ENCODE measurements at regions of chr15 and their contacts with region 1.

Region 1: GRCh38 chr15:88904624-88905327 is 8.4 kb downstream of the MFGE8 start:
- DNase-seq: peak; percentile 25 to 43 (median 43)
- H3K4me3 ChIP-seq: no peak overlapping the region
- H3K4me3 Mint-ChIP-seq: no peak overlapping the region
- H3K27ac ChIP-seq: no peak overlapping the region
- H3K27ac Mint-ChIP-seq: peak overlapping the region in 2 of 7 donors; percentile 38 to 74
- H3K4me1 ChIP-seq: no peaks in the 10 kb centered on the region
- H3K4me1 Mint-ChIP-seq: peaks cover 2% of the 10 kb centered on the region
- H3K27me3 ChIP-seq: no peaks in the 10 kb centered on the region
- H3K27me3 Mint-ChIP-seq: peaks cover 0 to 2% (median 0%) of the 10 kb centered on the region in 3 donors
- CTCF ChIP-seq: peak; percentile 95

Region 2: GRCh38 chr15:88844749-88845386 is 59.9 kb before region 1 on chr15:
- intact Hi-C with region 1: no loop called
- DNase-seq: no peak
- H3K4me3 ChIP-seq: no peak overlapping the region
- H3K4me3 Mint-ChIP-seq: no peak overlapping the region
- H3K27ac ChIP-seq: no peak overlapping the region
- H3K27ac Mint-ChIP-seq: no peak overlapping the region
- H3K4me1 ChIP-seq: no peaks in the 10 kb centered on the region
- H3K4me1 Mint-ChIP-seq: no peaks in the 10 kb centered on the region
- H3K27me3 ChIP-seq: no peaks in the 10 kb centered on the region
- H3K27me3 Mint-ChIP-seq: peaks cover 0 to 9% (median 0%) of the 10 kb centered on the region in 3 donors
- CTCF ChIP-seq: no peak

Region 3: GRCh38 chr15:89017370-89018066 is 112.7 kb after region 1 on chr15:
- intact Hi-C with region 1: loop called in 1 of 2 experiments (anchors 10 kb)
- DNase-seq: peak; percentile 10 to 23 (median 21)
- H3K4me3 ChIP-seq: peak overlapping the region in 1 of 3 experiments; percentile 45
- H3K4me3 Mint-ChIP-seq: peak overlapping the region; percentile 50 to 51
- H3K27ac ChIP-seq: no peak overlapping the region
- H3K27ac Mint-ChIP-seq: peak overlapping the region in 1 of 7 donors; percentile 41
- H3K4me1 ChIP-seq: peaks cover 8% of the 10 kb centered on the region in 2 donors
- H3K4me1 Mint-ChIP-seq: peaks cover 14% of the 10 kb centered on the region
- H3K27me3 ChIP-seq: peaks cover 0 to 11% of the 10 kb centered on the region in 2 donors
- H3K27me3 Mint-ChIP-seq: peaks cover 6 to 26% (median 14%) of the 10 kb centered on the region in 3 donors
- CTCF ChIP-seq: peak; percentile 66

Region 4: DNA sequence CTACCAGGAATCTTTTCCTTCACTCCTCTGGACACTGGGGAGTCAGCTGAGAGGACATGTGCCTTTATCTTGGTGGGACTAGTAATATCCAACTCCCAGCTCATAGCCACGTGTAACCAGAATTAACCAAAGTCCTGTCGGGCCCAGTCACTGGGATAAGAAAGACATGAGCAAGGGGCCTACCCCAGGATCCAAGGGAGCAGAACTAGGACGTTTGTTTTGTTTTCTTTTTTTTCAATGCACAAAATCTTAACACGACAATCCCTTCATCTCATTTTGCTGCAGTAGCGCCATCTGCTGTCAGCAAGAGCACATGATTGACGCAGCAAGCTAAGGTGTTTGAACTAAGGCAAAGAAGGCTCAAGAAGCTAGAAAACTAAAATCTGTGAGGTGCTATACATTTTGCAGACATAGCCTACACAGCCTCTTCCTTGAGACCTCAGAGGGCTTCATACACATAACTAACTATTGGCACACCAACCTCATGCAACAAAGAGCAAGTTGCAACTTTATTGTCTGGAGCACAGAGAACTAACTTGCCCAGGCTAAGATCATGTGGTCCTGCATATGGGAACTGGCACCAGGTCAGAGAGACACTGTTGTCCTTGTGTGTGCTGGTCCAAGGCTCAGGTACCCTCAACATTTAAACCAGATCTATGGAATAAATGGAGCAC is 273.0 kb after region 1 on chr15:
- intact Hi-C with region 1: loop called (anchors 2 to 10 kb)
- DNase-seq: peak; percentile 39 to 60 (median 58)
- H3K4me3 ChIP-seq: no peak overlapping the region
- H3K4me3 Mint-ChIP-seq: no peak overlapping the region
- H3K27ac ChIP-seq: peak overlapping the region in 1 of 2 donors; percentile 28
- H3K27ac Mint-ChIP-seq: peak overlapping the region in 5 of 7 donors; percentile 3 to 66 (median 30)
- H3K4me1 ChIP-seq: no peaks in the 10 kb centered on the region
- H3K4me1 Mint-ChIP-seq: no peaks in the 10 kb centered on the region
- H3K27me3 ChIP-seq: no peaks in the 10 kb centered on the region
- H3K27me3 Mint-ChIP-seq: no peaks in the 10 kb centered on the region
- CTCF ChIP-seq: peak; percentile 81

Region 5: GRCh38 chr15:89307046-89307587 is 402.3 kb after region 1 on chr15:
- intact Hi-C with region 1: no loop called
- DNase-seq: no peak
- H3K4me3 ChIP-seq: no peak overlapping the region
- H3K4me3 Mint-ChIP-seq: no peak overlapping the region
- H3K27ac ChIP-seq: no peak overlapping the region
- H3K27ac Mint-ChIP-seq: peak overlapping the region in 1 of 7 donors; percentile 41
- H3K4me1 ChIP-seq: no peaks in the 10 kb centered on the region
- H3K4me1 Mint-ChIP-seq: peaks cover 14% of the 10 kb centered on the region
- H3K27me3 ChIP-seq: no peaks in the 10 kb centered on the region
- H3K27me3 Mint-ChIP-seq: no peaks in the 10 kb centered on the region
- CTCF ChIP-seq: no peak

Measured in CD14-positive monocyte (primary cell).